Mammary epithelial cell (primary cell): ENCODE measurements at regions of chr2 and their contacts with region 1.

Region 1: GRCh38 chr2:235675678-235676535 is 182.1 kb downstream of the AGAP1 start:
- DNase-seq: peak; percentile 42
- H3K4me3 ChIP-seq: no peak overlapping the region
- H3K27ac ChIP-seq: no peak overlapping the region
- H3K4me1 ChIP-seq: peaks cover 36% of the 10 kb centered on the region
- H3K27me3 ChIP-seq: no peaks in the 10 kb centered on the region
- CTCF ChIP-seq: peak in 1 of 2 donors; percentile 15

Region 2: DNA sequence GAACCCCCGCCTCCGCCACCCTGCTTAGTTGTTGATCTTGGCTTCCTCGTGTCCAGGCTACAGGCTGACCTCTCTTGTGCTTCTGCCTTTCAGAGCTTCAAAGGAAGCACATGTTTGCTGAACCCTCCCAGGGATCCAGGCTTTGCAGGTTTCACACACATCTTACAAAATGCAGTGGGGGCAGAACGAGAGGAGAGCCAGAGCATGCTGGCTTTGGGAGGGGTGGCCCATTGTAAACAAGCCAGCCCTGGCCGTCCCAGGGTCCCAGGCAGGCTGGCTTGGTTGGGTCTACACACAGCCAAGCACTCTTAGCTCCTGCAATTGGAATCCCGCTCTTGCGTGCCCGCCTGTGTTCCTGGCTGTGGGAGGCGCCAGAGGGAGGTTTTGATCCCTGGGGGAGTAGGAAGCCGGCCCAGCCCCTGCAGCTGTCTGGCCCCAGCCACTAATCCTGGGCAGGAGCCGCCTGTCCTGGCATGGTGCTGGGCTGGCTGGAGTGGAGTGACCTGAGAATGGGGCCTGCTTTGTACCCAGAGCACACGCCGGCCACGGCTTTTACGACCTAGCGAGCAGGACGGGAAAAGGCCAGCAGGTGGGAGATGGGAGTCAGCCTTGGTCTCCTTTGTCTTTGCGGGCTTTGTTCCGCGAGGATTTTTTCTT is 670.2 kb before region 1 on chr2:
- CTCF ChIA-PET with region 1: no interaction called
- dilution Hi-C with region 1: no loop called
- in situ Hi-C with region 1: no loop called
- intact Hi-C with region 1: no loop called
- DNase-seq: no peak
- H3K4me3 ChIP-seq: no peak overlapping the region
- H3K27ac ChIP-seq: no peak overlapping the region
- H3K4me1 ChIP-seq: peaks cover 32% of the 10 kb centered on the region
- H3K27me3 ChIP-seq: no peaks in the 10 kb centered on the region
- CTCF ChIP-seq: no peak

Region 3: DNA sequence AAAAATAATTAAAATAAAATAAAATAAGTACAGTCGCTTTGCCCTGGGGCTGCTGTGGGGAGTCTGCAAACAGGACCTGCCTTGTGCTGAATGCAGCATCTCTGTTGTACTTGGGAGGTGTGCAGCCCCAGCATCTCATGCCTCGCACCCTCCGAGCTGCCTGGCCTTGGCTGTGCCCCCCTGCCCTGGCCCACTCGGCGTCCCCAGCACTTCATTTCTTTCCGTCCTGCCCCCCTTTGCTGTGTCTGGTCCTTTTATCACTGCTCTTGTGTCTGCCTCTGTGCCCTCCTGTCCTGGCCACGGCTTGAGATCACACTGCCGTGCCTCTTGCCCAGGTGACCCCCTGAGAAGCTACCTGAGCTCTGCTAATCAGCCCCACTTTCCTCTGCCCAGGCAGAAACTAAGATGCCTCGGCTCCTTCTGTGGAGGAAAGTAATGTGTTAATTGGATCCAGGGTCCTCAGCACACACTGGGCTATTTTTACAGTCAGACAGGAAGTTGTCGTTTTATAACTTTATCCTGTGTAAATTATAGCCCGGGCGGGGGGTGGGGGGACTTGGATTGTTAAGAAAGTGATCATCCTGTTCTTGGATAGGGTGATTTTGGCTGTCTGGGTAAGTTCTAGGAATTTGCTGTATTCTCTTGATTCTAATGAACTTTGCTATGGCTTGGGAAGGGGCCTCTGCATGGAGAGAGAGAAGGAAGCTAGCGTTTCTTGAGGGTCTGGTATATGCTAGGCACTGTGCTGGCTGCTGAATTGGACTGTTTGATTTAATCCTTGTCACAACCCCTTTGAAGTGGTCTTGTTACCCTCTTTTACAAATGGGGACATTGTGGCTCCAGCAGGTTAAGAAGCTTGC is 112.6 kb before region 1 on chr2:
- CTCF ChIA-PET with region 1: no interaction called
- dilution Hi-C with region 1: no loop called
- in situ Hi-C with region 1: no loop called
- intact Hi-C with region 1: no loop called
- DNase-seq: no peak
- H3K4me3 ChIP-seq: no peak overlapping the region
- H3K27ac ChIP-seq: no peak overlapping the region
- H3K4me1 ChIP-seq: no peaks in the 10 kb centered on the region
- H3K27me3 ChIP-seq: no peaks in the 10 kb centered on the region
- CTCF ChIP-seq: no peak

Region 4: DNA sequence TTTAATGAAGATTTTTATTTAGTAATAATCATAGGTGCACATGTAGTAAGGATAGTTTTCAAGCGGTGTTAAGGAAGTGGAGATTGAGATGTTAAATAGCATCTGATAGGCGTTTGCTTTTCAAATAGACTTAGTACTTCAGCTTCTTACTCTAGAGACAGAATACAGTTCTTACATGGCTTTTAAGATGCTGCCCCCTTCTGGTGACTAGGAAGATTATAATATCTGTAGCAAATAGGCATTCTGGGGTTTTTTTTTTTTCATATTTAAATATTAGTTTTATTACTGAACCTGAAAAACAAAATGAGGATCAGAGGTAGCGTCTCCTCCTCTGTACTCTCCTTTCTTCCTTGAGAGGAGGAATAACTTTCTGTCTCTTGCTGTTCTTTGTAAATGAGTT is 81.9 kb before region 1 on chr2:
- CTCF ChIA-PET with region 1: no interaction called
- dilution Hi-C with region 1: no loop called
- in situ Hi-C with region 1: no loop called
- intact Hi-C with region 1: no loop called
- DNase-seq: peak; percentile 48
- H3K4me3 ChIP-seq: no peak overlapping the region
- H3K27ac ChIP-seq: no peak overlapping the region
- H3K4me1 ChIP-seq: peaks cover 14% of the 10 kb centered on the region
- H3K27me3 ChIP-seq: no peaks in the 10 kb centered on the region
- CTCF ChIP-seq: peak; percentile 62 to 64

Region 5: GRCh38 chr2:235659767-235660322 is 16.1 kb before region 1 on chr2:
- CTCF ChIA-PET with region 1: no interaction called
- dilution Hi-C with region 1: no loop called
- in situ Hi-C with region 1: no loop called
- intact Hi-C with region 1: loop called (anchors 1 kb)
- DNase-seq: peak; percentile 29
- H3K4me3 ChIP-seq: no peak overlapping the region
- H3K27ac ChIP-seq: no peak overlapping the region
- H3K4me1 ChIP-seq: no peaks in the 10 kb centered on the region
- H3K27me3 ChIP-seq: no peaks in the 10 kb centered on the region
- CTCF ChIP-seq: no peak

Region 6: DNA sequence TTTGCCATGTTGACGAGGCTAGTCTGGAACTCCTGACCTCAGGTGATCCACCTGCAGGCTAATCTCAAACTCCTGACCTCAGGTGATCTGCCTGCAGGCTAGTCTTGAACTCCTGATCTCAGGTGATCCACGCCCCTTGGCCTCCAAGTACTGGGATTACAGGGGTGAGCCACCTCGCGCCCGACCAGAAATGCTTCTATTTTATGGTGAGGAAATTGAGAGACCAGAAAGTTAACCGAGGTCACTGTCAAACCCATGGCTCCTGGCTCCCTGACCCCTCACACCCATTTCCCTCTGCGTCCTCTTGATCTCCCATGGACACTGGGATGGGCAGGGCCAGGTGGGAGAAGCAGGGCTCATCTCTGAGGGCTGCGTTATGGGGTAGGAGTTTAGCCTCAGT is 27.9 kb after region 1 on chr2:
- CTCF ChIA-PET with region 1: no interaction called
- dilution Hi-C with region 1: no loop called
- in situ Hi-C with region 1: no loop called
- intact Hi-C with region 1: loop called (anchors 2 kb)
- DNase-seq: no peak
- H3K4me3 ChIP-seq: no peak overlapping the region
- H3K27ac ChIP-seq: no peak overlapping the region
- H3K4me1 ChIP-seq: peaks cover 35% of the 10 kb centered on the region
- H3K27me3 ChIP-seq: no peaks in the 10 kb centered on the region
- CTCF ChIP-seq: no peak

Region 7: GRCh38 chr2:235779444-235779896 is 103.6 kb after region 1 on chr2:
- CTCF ChIA-PET with region 1: no interaction called
- dilution Hi-C with region 1: no loop called
- in situ Hi-C with region 1: no loop called
- intact Hi-C with region 1: no loop called
- DNase-seq: peak; percentile 67
- H3K4me3 ChIP-seq: no peak overlapping the region
- H3K27ac ChIP-seq: no peak overlapping the region
- H3K4me1 ChIP-seq: no peaks in the 10 kb centered on the region
- H3K27me3 ChIP-seq: no peaks in the 10 kb centered on the region
- CTCF ChIP-seq: peak; percentile 90 to 96